HepG2 (cell line): ENCODE measurements at regions of chr13 and their contacts with region 1.

Region 1: DNA sequence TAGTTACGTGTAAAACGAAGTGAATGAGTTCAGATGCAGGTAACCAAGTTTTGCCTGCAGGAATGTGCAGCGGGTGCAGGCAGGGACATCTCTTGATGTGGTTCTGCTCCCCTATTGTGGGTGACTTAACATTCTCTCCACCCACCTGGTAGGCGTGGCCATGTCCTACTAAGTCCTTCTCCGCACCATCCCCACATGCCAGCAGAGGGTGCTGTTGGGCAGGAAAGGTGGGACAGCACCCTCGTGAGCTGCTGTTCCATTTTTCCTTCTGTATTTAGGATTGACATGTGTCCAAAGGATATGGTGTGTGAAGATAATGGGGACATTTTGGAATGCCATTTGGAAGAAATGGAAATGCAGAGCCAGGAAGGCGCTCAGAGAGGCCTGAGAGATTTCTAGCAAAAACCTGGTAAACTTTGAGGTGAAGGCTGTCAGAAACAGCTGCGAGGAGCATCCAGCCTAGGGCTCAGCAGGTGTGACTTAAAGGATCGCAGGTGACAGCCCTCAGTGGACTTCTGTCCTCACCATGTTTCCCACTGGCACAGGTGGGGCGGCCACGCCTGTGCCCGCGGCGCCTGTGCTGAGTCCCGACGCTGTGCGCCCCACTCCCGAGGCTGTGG is 26.2 kb upstream of the MCF2L start:
- DNase-seq: peak; percentile 94
- ATAC-seq: peak; percentile 92
- H3K4me3 ChIP-seq: peak overlapping the region; percentile 42 to 72 (median 67)
- H3K27ac ChIP-seq: no peak overlapping the region
- H3K4me1 ChIP-seq: peaks cover 30% of the 10 kb centered on the region
- H3K27me3 ChIP-seq: no peaks in the 10 kb centered on the region; a peak in 1 of 5 replicates
- CTCF ChIP-seq: peak; percentile 99
- EP300 ChIP-seq: no peak
- POLR2A ChIP-seq: no peak; a peak in 1 of 4 replicates
- RAD21 ChIP-seq: peak; percentile 95

Region 2: DNA sequence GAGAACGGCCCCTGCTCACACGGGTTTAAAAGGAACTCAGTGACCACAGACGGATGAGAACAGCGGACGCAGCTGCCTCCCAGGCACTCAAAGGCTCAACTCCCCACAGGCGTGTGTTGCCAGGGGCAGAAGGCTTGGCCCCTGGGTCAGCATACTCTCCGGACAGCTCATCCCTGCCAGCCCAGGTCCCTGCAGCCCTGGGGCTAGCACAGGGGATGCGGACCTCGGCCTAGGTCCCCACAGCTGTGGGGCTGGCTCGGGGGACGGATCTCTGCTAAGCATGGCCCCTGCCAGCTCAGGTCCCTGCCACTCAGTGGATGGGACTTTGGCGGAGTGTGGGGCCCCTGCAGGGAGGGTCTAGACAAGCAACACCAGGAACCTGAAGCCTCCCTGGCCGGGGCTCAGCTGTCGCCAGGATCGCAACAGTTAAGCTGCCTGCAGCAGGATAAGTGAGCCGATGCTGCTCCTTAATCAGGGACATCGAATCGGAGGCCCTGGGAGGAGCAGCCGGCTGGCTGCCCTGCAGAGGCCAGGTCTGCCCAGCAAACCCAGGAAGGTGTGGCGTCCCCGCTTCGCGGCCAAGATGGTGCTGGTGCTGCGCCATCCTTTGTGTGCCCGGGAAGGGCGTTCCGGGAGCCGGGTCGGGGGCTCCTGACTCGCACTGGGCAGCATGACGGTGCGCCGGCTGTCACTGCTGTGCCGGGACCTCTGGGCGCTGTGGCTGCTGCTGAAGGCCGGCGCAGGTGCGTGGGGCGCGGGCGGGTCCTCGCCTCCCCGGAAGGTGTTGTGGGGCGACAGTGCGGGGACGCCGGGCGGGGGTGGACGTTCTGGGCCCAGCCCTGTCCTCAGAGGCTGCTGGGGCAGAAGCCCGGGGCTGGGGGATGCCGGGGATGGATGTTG is 58.7 kb after region 1 on chr13:
- CTCF ChIA-PET with region 1: interaction called, 33 read pairs
- POLR2A ChIA-PET with region 1: interaction called, 3 read pairs
- in situ Hi-C with region 1: loop called (anchors 5 kb)
- intact Hi-C with region 1: loop called (anchors 1 kb)
- DNase-seq: peak; percentile 47
- ATAC-seq: peak; percentile 82
- H3K4me3 ChIP-seq: peak overlapping the region; percentile 61 to 76 (median 64); a peak in 5 of 6 replicates
- H3K27ac ChIP-seq: peak overlapping the region; percentile 37
- H3K4me1 ChIP-seq: peaks cover 60% of the 10 kb centered on the region
- H3K27me3 ChIP-seq: no peaks in the 10 kb centered on the region
- CTCF ChIP-seq: peak; percentile 11; the same call in 1 of the 2 replicates
- EP300 ChIP-seq: no peak
- POLR2A ChIP-seq: no peak
- RAD21 ChIP-seq: no peak